Gastrocnemius medialis (tissue), 4 donors: ENCODE measurements at regions of chr22 and their contacts with region 1.

Region 1: DNA sequence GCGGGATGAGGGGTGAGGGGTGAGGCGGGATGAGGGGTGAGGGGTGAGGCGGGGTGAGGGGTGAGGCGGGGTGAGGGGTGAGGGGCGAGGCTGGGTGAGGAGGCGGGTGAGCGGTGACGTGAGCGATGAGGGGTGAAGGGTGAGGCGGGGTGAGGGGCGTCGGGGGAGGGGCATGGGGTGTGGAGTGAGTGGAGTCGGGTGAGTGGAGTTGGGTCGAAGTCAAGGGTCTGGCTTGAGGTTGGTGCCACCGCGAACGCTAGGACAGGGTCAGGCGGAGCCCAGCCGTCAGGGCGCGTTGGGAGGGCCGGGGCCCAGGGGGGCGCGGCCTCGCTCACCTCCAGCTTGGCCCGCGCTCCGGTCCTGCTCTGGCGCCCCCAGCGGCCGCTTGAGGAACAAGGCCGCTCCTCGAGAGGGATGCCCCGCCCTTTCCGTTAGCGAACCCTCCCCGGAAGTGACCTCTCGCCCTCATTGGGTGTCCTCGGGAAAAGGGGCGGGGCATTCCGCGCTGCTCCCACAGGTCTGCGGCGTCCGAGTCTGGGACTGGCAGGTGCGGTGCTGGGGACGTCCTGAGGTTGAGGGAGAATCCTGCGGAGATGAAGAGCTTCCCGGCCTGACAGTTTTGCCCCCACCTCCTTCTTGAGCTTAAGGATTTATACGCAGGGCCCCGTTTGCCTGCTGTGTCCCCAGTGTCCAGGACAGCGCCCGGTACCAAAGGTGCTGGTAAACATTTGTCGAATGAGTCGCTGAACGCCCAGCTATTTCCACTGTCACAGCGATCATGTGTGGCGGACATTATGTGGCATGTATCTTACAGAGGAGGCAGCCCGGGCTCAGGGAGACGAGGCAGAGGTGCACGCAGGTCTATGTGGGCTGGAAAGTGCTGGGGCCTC is at the start of gene SYCE3:
- DNase-seq: peak; percentile 96 to 97
- ATAC-seq: peak; percentile 96 to 99
- H3K4me3 ChIP-seq: peak within 1 kb of the TSS; percentile 67 to 87 (median 68)
- H3K27ac ChIP-seq: peak within 1 kb of the TSS; percentile 77 to 82 (median 81)
- H3K4me1 ChIP-seq: peaks cover 0 to 10% of the 10 kb centered on the region in 2 donors
- H3K27me3 ChIP-seq: no peaks in the 10 kb centered on the region
- CTCF ChIP-seq: peak; percentile 95 to 98 (median 97)
- POLR2A ChIP-seq: peak; percentile 78 to 81
- total RNA-seq, gene SYCE3: not detected

Region 2: GRCh38 chr22:50582562-50583293 is 20.0 kb after region 1 on chr22 and contains the start of gene CHKB:
- in situ Hi-C with region 1: no loop called
- intact Hi-C with region 1: loop called (anchors 1 kb)
- DNase-seq: peak; percentile 97 to 98
- ATAC-seq: peak; percentile 79 to 89
- H3K4me3 ChIP-seq: peak within 1 kb of the TSS; percentile 69 to 96 (median 74)
- H3K27ac ChIP-seq: peak within 1 kb of the TSS; percentile 89 to 98 (median 96)
- H3K4me1 ChIP-seq: peaks cover 27 to 39% of the 10 kb centered on the region in 2 donors
- H3K27me3 ChIP-seq: no peaks in the 10 kb centered on the region
- CTCF ChIP-seq: no peak
- POLR2A ChIP-seq: peak; percentile 96 to 98
- total RNA-seq, gene CHKB: 10.8 to 39.7 (median 24.4) TPM

Region 3: DNA sequence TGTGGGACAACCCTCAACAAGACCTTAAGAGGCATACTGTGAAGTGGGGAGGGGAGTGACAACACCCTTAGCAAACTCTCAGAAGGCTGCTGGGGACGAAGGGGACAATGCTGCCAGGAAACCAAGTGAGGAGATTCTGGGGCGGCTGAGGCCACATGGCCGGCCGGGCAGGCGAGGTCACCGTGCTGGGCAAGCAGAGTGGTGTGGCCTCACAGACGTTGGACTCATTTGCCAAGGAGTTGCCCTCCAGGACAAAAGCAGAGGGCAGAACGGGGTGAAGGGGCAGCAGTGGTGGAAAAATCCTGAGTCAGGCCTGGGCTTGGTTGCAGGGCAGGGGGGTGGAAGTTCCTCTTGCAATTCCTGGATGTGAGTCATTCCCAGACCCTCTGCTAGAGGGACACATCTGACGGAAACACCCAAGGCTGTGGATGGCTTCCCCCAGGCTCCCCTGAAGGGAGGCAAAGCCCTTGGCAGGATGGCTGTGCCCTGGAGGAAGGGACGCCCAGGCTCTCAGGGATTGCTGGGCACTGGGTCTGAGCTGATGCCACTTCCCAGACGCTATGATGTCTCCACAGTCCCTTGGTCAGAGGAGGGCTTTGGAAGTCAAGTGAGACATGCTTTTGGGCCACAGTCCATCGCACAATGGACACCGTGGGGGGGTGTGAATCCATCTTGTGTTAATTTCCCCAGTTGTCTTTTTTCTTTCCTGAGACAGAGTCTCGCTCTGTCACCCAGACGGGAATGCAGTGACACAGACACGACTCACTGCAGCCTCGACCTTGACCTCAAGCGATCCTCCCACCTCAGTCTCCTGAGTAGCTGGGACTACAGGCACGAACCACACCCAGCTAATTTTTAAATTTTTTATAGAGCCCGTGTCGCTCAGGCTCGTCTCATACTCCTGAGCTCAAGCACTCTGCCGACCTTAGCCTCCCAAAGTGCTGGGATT is 93.6 kb after region 1 on chr22:
- in situ Hi-C with region 1: no loop called
- intact Hi-C with region 1: no loop called
- DNase-seq: no peak
- ATAC-seq: peak; percentile 64 to 74
- H3K4me3 ChIP-seq: peak overlapping the region in 1 of 4 donors; percentile 28
- H3K27ac ChIP-seq: peak overlapping the region; percentile 51 to 71 (median 62)
- H3K4me1 ChIP-seq: no peaks in the 10 kb centered on the region
- H3K27me3 ChIP-seq: peaks cover 0 to 17% (median 4%) of the 10 kb centered on the region in 3 donors
- CTCF ChIP-seq: no peak
- POLR2A ChIP-seq: peak in 1 of 2 donors; percentile 24